MCF 10A (cell line): ENCODE measurements at regions of chr5 and their contacts with region 1.

Region 1: GRCh38 chr5:14168144-14168792 is 25.1 kb downstream of the TRIO start:
- DNase-seq: peak; percentile 44
- H3K4me3 Mint-ChIP-seq: no peak overlapping the region
- H3K27ac Mint-ChIP-seq: peak overlapping the region; percentile 63
- H3K4me1 Mint-ChIP-seq: peaks cover 60% of the 10 kb centered on the region
- H3K27me3 Mint-ChIP-seq: no peaks in the 10 kb centered on the region
- CTCF ChIP-seq: no peak

Region 2: GRCh38 chr5:14118527-14119320 is 49.5 kb before region 1 on chr5:
- CTCF ChIA-PET with region 1: no interaction called
- POLR2A ChIA-PET with region 1: no interaction called
- intact Hi-C with region 1: no loop called
- DNase-seq: no peak
- H3K4me3 Mint-ChIP-seq: no peak overlapping the region
- H3K27ac Mint-ChIP-seq: no peak overlapping the region
- H3K4me1 Mint-ChIP-seq: no peaks in the 10 kb centered on the region
- H3K27me3 Mint-ChIP-seq: no peaks in the 10 kb centered on the region
- CTCF ChIP-seq: no peak

Region 3: GRCh38 chr5:14184725-14185124 is 16.5 kb after region 1 on chr5:
- CTCF ChIA-PET with region 1: interaction called, 8 read pairs
- POLR2A ChIA-PET with region 1: interaction called, 10 read pairs
- intact Hi-C with region 1: no loop called
- DNase-seq: peak; percentile 38
- H3K4me3 Mint-ChIP-seq: peak overlapping the region; percentile 56
- H3K27ac Mint-ChIP-seq: peak overlapping the region; percentile 98
- H3K4me1 Mint-ChIP-seq: peaks cover 66% of the 10 kb centered on the region
- H3K27me3 Mint-ChIP-seq: no peaks in the 10 kb centered on the region
- CTCF ChIP-seq: no peak